Ovary (tissue), 10 donors: ENCODE measurements at regions of chr5 and their contacts with region 1.

Region 1: DNA sequence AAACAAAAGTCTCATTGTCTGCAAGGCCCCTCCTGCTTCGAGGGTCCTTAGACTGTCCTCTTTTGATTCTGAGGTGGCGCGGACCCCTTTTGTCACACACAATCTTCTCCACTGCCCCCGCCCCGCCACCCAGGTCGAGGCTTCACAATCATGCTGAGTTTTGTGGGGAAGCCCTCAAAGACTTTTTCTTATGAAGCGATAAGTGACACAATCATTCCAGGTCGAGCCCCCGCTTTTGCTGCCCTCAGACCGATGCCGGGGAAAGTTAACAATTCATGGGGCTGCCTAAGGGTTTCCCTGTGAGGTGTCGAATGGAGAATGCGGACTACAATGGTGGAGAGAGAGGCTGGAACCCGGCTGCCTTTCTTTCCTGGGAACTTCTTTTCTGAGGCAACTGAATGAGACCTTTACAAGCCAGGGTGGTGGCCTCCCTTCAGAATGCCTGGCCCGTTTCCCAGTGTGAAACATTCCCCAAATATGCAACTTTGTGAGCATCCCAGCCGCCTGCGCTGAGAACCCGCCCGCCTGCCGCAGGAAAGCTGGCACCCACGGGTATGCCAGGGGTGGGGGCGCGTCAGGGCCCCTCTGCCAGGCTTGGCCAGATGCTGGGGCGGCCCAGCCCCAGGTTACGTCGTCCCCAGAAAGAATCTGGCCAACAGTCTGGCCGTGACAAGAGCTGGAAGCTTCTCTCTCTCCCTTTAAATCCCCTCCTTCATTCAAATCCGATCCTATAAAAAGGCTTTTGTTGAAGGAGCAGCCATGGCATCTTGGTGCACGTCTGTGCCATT is 71.9 kb downstream of the MAP1B start:
- DNase-seq: peak; percentile 68 to 82 (median 79)
- H3K4me3 ChIP-seq: peak overlapping the region; percentile 28
- H3K27ac ChIP-seq: peak overlapping the region in 1 of 2 donors; percentile 34
- H3K4me1 ChIP-seq: peaks cover 11% of the 10 kb centered on the region
- H3K27me3 ChIP-seq: no peaks in the 10 kb centered on the region
- CTCF ChIP-seq: no peak
- EP300 ChIP-seq: no peak
- POLR2A ChIP-seq: no peak

Region 2: DNA sequence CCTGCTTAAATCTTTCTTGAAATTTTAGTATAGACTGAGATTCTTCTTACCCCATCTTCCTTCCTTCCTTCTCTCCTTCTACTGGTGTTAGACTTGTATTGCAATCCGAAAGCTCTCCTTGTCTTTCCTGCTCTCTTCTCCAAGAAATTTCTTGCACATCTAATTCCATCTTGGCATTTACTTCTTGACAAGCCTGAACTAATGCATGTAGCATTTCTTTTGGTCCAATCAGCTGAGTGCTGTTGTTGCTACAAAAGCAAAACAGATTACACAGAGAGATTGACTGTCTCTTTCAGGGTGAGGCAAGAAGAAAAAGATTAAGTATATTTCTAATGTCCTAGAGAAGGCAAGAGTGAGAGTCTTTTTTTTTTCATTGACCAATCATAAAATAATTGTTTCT is 123.6 kb before region 1 on chr5:
- intact Hi-C with region 1: no loop called
- DNase-seq: no peak
- H3K4me3 ChIP-seq: no peak overlapping the region
- H3K27ac ChIP-seq: no peak overlapping the region
- H3K4me1 ChIP-seq: no peaks in the 10 kb centered on the region
- H3K27me3 ChIP-seq: no peaks in the 10 kb centered on the region
- CTCF ChIP-seq: no peak
- EP300 ChIP-seq: no peak
- POLR2A ChIP-seq: no peak

Region 3: DNA sequence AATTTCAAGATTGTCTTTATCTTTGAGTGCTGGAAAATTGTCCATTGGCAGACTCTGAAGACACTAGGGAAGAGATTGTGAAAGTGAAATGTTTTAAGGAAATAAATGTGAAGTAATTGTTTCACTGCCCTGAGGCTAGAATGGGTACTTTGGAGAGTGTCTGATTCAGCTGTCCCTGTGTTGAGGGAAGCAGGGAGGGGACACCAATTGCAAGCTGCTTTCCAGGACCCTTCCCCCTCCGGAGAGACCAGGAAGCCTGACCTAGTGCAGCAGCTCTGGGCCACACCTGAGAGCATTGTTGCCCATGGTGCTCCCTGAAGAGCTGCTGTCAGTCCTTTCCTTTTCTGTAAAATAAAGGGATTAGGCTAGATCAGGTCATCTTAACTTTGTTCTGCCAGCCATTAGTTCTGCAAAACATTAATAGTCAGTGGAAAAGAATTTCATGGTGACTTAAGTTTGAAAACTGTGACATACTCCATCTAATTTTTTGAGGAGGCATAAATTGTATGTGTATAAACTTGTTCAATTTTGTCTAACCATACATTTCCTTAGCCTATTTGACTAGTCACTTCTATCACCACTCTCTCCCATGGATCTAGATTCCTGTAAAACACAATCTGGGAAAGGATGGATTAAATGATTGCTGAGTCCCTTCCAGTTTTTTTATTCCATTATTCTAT is 53.1 kb before region 1 on chr5:
- intact Hi-C with region 1: loop called in 1 of 4 experiments (anchors 10 kb)
- DNase-seq: no peak
- H3K4me3 ChIP-seq: no peak overlapping the region
- H3K27ac ChIP-seq: no peak overlapping the region
- H3K4me1 ChIP-seq: no peaks in the 10 kb centered on the region
- H3K27me3 ChIP-seq: no peaks in the 10 kb centered on the region
- CTCF ChIP-seq: no peak
- EP300 ChIP-seq: no peak
- POLR2A ChIP-seq: no peak

Region 4: GRCh38 chr5:72138943-72139521 is 40.2 kb before region 1 on chr5:
- intact Hi-C with region 1: no loop called
- DNase-seq: peak in 4 of 5 donors; percentile 32 to 53 (median 40)
- H3K4me3 ChIP-seq: no peak overlapping the region
- H3K27ac ChIP-seq: peak overlapping the region in 1 of 2 donors; percentile 6
- H3K4me1 ChIP-seq: peaks cover 19% of the 10 kb centered on the region
- H3K27me3 ChIP-seq: no peaks in the 10 kb centered on the region
- CTCF ChIP-seq: no peak
- EP300 ChIP-seq: no peak
- POLR2A ChIP-seq: no peak

Region 5: GRCh38 chr5:72296256-72296655 is 117.0 kb after region 1 on chr5:
- intact Hi-C with region 1: loop called in 1 of 4 experiments (anchors 5 kb)
- DNase-seq: no peak
- H3K4me3 ChIP-seq: no peak overlapping the region
- H3K27ac ChIP-seq: no peak overlapping the region
- H3K4me1 ChIP-seq: peaks cover 3% of the 10 kb centered on the region
- H3K27me3 ChIP-seq: no peaks in the 10 kb centered on the region
- CTCF ChIP-seq: no peak
- EP300 ChIP-seq: no peak
- POLR2A ChIP-seq: no peak